ENCODE measurements at regions of chr5 and their contacts with region 1.

Region 1: GRCh38 chr5:12312343-12312742 is 408.1 kb upstream of the CTNND2 start:
- DNase-seq: no peak
- ATAC-seq: no peak
- H3K4me3 Mint-ChIP-seq: no peak overlapping the region
- H3K27ac Mint-ChIP-seq: no peak overlapping the region
- H3K4me1 Mint-ChIP-seq: peaks cover 16% of the 10 kb centered on the region
- H3K27me3 Mint-ChIP-seq: no peaks in the 10 kb centered on the region
- CTCF ChIP-seq: no peak

Region 2: GRCh38 chr5:12075302-12075701 is 237.0 kb before region 1 on chr5:
- CTCF ChIA-PET with region 1: no interaction called
- POLR2A ChIA-PET with region 1: interaction called, 10 read pairs
- DNase-seq: no peak
- ATAC-seq: no peak
- H3K4me3 Mint-ChIP-seq: no peak overlapping the region
- H3K27ac Mint-ChIP-seq: no peak overlapping the region
- H3K4me1 Mint-ChIP-seq: peaks cover 5% of the 10 kb centered on the region
- H3K27me3 Mint-ChIP-seq: no peaks in the 10 kb centered on the region; the same call in 1 of the 2 replicates
- CTCF ChIP-seq: no peak

Measured in WTC11 (cell line).